AG04450 (cell line): ENCODE measurements at regions of chr19 and their contacts with region 1.

Region 1: GRCh38 chr19:17113127-17113785 is 37.7 kb downstream of the MYO9B start:
- DNase-seq: no peak
- H3K4me3 ChIP-seq: no peak overlapping the region
- H3K27ac ChIP-seq: no peak overlapping the region
- H3K27me3 ChIP-seq: no peaks in the 10 kb centered on the region
- CTCF ChIP-seq: no peak

Region 2: GRCh38 chr19:17235618-17236377 is 122.5 kb after region 1 on chr19:
- CTCF ChIA-PET with region 1: no interaction called
- POLR2A ChIA-PET with region 1: no interaction called
- DNase-seq: peak; percentile 36
- H3K4me3 ChIP-seq: peak overlapping the region; percentile 63
- H3K27ac ChIP-seq: peak overlapping the region; percentile 47
- H3K27me3 ChIP-seq: no peaks in the 10 kb centered on the region
- CTCF ChIP-seq: peak; percentile 41; the same call in 1 of the 2 replicates

Region 3: DNA sequence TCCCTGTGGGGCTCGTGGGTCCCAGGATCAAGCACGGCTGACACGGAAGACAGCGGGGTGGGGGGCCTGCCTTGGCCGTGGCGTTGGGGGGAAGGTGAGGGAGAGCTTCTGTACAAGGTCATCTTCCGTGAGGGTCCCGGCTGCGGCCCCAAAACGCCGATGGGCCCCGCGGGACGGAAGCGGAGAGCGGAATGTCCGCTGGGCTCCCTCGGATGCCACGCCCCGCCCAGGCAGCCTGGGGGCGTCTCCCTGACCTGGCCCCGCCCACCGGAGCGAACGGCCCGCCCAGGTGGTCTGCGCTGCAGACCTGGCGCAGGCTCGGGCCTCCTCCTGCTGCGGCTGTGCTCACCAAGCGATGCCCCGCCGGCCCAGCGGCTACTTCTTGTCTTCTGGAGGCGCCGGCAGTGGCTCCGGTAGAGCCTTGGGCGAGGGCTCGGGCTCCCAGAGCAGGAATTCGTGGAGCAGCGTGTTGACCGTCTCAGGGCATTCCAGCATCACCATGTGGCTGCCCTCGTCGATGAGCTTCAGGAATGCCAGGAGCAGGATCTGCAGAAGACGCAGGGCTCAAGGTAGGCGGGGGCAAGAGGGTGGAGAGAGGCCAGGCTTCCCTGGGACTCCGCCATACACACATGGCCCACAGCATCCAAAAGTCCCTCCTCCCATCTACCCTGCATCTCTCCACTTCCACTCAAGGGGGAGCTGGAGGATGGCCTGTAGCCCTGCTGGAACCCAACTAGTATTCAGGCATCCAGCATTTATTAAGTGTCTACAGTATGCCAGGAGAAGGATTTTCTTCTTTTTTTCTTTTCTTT is 179.2 kb after region 1 on chr19:
- CTCF ChIA-PET with region 1: no interaction called
- POLR2A ChIA-PET with region 1: interaction called, 11 read pairs
- DNase-seq: peak; percentile 59
- H3K4me3 ChIP-seq: peak overlapping the region; percentile 63
- H3K27ac ChIP-seq: peak overlapping the region; percentile 81
- H3K27me3 ChIP-seq: no peaks in the 10 kb centered on the region
- CTCF ChIP-seq: peak; percentile 75